ENCODE measurements at regions of chr7 and their contacts with region 1.

Region 1: DNA sequence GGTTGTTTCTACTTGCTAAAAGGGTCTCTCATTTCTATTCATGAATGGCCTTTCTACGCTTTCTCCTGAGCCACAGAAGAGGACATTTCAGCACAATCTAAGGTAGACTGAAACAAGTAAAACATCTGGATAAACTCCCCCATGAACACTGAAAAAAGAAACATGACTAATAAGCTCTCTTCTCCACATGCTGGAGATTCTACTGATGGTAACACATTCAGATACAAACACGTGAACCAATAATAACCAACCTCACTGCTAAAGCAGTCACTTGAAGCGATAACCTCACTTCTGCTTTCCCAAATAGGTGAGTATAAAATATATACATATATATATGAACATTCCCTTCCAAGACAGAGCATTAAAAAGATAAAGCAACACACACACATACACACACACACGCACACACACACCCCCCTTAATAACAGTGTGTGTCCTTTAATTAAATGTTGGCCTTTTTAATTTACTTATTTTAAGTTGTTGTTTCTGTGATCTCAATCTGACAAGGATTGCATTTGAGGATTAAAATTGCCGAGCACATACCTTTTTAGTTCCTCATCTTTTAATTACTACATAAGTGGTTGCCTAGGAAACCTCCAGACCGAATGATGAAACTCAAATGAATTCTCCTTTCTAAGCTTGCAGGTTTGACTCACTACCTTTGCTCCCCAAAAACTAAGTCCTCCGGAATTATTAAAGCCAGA is 292.4 kb upstream of the KLF14 start:
- DNase-seq: no peak
- H3K4me3 Mint-ChIP-seq: no peak overlapping the region
- H3K27ac Mint-ChIP-seq: peak overlapping the region; percentile 84
- H3K4me1 Mint-ChIP-seq: peaks cover 64% of the 10 kb centered on the region
- H3K27me3 Mint-ChIP-seq: no peaks in the 10 kb centered on the region

Region 2: GRCh38 chr7:130896898-130897514 is 129.4 kb before region 1 on chr7:
- intact Hi-C with region 1: loop called (anchors 1 kb)
- DNase-seq: peak; percentile 62
- H3K4me3 Mint-ChIP-seq: peak overlapping the region; percentile 26
- H3K27ac Mint-ChIP-seq: peak overlapping the region; percentile 86
- H3K4me1 Mint-ChIP-seq: peaks cover 73% of the 10 kb centered on the region
- H3K27me3 Mint-ChIP-seq: no peaks in the 10 kb centered on the region

Region 3: DNA sequence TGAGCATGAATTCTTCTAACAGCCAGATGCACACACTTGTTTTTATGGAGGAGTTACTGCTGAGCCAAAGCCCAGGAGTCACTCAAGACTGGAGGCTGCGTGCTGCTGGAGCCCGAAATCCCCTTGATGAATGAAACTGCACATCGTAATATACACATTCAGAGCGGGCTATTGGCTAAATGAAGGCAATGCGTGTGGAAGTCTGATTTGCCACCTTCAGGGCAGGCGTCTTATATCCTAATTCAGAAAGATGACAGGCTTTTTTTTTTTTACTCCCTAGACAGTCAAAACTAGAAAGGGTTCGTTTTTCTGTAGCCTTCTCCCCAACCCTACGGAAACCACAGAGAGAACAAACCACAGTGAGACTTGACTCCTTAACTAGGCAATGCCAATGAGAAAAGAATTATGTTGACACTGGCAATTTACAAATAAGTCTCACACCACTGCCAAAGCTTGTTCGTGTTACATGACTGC is 65.3 kb before region 1 on chr7:
- intact Hi-C with region 1: loop called (anchors 1 kb)
- DNase-seq: peak; percentile 85
- H3K4me3 Mint-ChIP-seq: peak overlapping the region; percentile 95
- H3K27ac Mint-ChIP-seq: peak overlapping the region; percentile 98
- H3K4me1 Mint-ChIP-seq: peaks cover 34% of the 10 kb centered on the region
- H3K27me3 Mint-ChIP-seq: no peaks in the 10 kb centered on the region

Region 4: GRCh38 chr7:130970696-130971095 is 55.8 kb before region 1 on chr7:
- intact Hi-C with region 1: loop called (anchors 1 kb)
- DNase-seq: no peak
- H3K4me3 Mint-ChIP-seq: peak overlapping the region; percentile 44
- H3K27ac Mint-ChIP-seq: peak overlapping the region; percentile 94
- H3K4me1 Mint-ChIP-seq: peaks cover 70% of the 10 kb centered on the region
- H3K27me3 Mint-ChIP-seq: no peaks in the 10 kb centered on the region

Region 5: DNA sequence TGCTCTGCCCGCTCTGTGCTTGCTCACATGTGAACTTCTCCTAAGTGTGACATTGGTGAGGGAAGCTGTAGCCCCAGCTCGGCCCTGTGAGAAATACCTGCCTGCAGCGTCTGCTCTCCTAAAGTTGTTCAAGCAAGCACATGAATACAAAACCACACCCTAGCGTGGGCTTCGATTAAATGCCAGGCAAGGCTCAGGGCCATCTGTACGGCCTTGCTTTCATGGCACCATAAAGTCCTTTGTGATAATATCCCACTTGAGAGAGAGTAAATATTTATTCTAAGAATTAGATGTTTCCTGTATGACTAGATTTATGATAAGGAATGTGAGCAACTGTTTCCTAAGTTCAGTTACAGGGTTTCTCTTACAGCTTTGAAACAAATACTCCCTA is 29.6 kb before region 1 on chr7:
- intact Hi-C with region 1: loop called (anchors 1 kb)
- DNase-seq: no peak
- H3K4me3 Mint-ChIP-seq: peak overlapping the region; percentile 66
- H3K27ac Mint-ChIP-seq: peak overlapping the region; percentile 90
- H3K4me1 Mint-ChIP-seq: peaks cover 66% of the 10 kb centered on the region
- H3K27me3 Mint-ChIP-seq: no peaks in the 10 kb centered on the region

Measured in activated T-helper 2 cell treated with anti-CD3 and anti-CD28 coated beads, Interferon-gamma antibody, Interleukin-2, Interleukin-4, amounts not matched to agents 10 μg/mL and 5 μg/mL and 100 μg/mL, durations not matched to agents 14 hours and 24 hours and 36 hours (primary cell).